Tibial artery (tissue), 4 donors: ENCODE measurements at regions of chr1 and their contacts with region 1.

Region 1: DNA sequence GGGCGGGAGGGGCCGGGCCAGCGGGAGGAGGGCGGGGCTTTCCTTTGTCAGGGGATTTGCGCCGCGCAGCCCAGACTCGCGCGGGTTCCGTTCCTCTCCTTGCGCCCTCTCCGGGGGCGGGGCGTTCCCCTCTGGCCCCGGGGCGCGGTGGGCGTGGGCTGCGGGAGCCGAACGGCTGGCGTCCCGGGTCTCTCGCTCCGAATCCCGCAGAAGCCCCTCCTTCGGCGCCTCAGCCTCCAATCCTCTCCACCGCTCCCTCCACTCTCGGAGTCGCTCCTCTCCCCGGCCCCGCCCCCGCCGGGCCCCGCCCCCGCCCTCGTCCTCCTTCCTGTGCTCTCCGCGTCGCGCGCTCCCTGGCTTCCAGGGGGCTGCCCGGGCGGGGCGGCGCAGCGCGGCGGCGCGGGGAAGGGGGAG is 82.8 kb upstream of the BMP8A start:
- DNase-seq: peak; percentile 95 to 99
- H3K4me3 ChIP-seq: peak overlapping the region; percentile 89 to 93
- H3K27ac ChIP-seq: peak overlapping the region; percentile 84 to 93
- H3K4me1 ChIP-seq: peaks cover 0 to 83% (median 62%) of the 10 kb centered on the region in 4 donors
- H3K27me3 ChIP-seq: no peaks in the 10 kb centered on the region
- CTCF ChIP-seq: no peak

Region 2: DNA sequence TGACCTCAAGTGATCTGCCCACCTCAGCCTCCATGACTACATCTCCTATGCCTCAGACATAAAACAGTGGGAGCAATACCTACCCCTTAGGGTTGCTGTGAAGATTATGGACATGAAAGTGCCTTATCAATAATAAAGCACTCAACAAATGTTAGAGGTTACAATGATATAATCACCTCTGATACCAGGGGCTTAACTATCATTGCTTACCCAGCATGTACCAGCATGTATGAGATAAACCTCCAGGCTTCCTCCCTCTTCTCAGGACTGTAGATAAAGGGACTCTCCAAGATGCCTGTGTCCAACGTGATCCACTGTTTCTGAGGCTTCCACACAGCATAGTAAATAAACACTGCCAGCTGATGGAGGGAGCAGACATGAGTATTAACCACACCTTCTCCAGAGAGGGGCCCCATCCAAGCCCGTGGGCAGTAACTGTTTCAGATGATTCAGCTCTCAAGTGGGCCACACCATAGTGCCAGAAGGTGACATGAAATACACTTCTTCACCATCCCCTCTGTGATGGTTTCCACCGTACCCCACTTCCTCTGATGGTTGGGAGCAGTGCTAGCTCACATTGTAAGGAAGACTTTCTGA is 493.2 kb before region 1 on chr1:
- intact Hi-C with region 1: no loop called
- DNase-seq: no peak
- H3K4me3 ChIP-seq: no peak overlapping the region
- H3K27ac ChIP-seq: no peak overlapping the region
- H3K4me1 ChIP-seq: no peaks in the 10 kb centered on the region
- H3K27me3 ChIP-seq: no peaks in the 10 kb centered on the region
- CTCF ChIP-seq: no peak

Region 3: DNA sequence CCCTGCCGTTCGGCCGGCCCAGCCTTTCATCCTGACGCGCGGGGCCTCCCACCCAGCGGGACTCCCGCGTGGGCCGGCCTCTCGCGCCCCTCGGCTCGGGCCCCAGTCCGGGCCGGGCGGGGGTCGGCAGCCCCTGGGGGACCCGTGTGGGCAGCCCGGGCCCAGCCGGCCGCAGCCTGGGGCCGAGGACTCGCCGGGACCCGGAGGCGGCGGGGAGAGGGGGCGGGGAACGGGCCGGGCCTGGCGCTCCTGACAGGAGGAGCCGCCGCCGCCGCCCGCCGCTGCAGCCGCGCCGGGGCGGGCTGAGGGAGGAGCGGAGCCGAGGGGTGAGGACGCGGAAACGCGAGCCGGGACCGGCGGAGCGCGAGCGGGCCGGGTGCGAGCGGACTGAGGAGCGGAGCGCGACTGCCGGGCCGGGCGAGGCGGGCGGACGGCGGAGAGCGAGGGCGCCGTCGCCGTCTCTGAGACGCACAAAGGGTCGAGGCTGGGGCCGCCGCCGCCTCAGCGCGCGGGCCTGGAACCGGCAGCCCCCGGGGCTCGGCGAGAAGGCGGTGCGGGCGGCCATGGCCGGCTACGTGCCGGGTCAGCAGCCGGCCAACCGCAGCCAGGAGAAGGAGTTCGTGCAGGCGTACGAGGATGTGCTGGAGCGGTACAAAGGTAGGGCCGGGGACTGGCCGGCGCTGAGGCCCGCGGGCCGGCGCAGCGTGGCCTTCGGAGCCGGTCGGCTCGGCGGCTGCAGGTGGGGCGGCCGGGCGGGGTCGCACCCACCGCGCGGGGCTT is 303.4 kb before region 1 on chr1:
- intact Hi-C with region 1: loop called (anchors 5 kb)
- DNase-seq: peak; percentile 77 to 91
- H3K4me3 ChIP-seq: peak overlapping the region; percentile 61 to 72
- H3K27ac ChIP-seq: peak overlapping the region; percentile 87 to 92
- H3K4me1 ChIP-seq: peaks cover 0 to 61% (median 51%) of the 10 kb centered on the region in 4 donors
- H3K27me3 ChIP-seq: no peaks in the 10 kb centered on the region
- CTCF ChIP-seq: no peak

Region 4: DNA sequence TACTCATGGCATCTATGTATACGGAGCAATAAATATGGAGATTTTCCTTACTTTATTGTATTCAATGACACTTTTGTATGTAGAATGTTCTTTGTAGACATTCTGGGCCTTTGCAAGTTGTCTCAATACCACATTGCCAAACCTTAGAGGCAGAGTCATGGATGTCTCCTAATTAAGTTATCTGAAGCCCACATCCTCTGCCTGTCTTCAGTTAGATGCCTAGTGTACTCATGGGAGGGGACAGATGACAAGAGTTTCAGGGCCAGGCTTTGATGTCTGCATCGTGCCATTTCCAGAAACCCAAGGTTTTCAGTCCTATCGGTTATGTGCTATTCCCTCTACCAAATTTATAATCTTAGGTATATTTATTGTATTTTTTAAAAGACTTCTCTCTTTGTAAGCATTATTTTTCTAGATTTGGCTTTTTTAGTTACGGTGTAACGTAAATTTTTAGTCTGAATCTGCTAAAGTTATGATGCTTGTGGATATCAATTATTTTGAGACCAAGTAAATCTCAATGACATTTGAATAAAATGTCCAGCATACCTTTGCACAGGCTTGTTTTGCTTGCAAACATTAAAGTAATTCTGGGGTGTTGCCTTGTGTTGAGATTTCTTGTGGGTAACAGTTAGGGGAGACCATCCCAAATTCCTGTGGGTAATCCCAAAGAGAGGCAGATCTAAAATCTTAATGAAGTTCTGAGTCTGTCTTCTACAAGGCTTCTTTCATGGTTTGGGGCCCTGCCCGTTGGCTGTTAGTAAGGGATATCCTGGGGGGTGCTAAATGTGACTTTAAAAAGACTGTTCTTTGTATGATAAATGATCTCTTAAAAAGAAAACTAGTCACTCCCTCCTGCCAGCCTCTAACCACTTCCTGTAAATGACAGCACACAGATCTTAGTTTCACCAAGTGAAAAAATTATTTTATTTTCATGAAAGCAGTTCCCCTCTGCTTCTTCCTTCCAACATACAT is 212.1 kb before region 1 on chr1:
- intact Hi-C with region 1: loop called (anchors 10 kb)
- DNase-seq: no peak
- H3K4me3 ChIP-seq: no peak overlapping the region
- H3K27ac ChIP-seq: peak overlapping the region; percentile 79 to 83
- H3K4me1 ChIP-seq: peaks cover 9 to 60% (median 47%) of the 10 kb centered on the region in 4 donors
- H3K27me3 ChIP-seq: no peaks in the 10 kb centered on the region
- CTCF ChIP-seq: no peak

Region 5: GRCh38 chr1:39268112-39268581 is 140.5 kb before region 1 on chr1:
- intact Hi-C with region 1: loop called (anchors 10 kb)
- DNase-seq: peak; percentile 47 to 70
- H3K4me3 ChIP-seq: peak overlapping the region; percentile 44 to 53
- H3K27ac ChIP-seq: peak overlapping the region; percentile 75 to 77
- H3K4me1 ChIP-seq: peaks cover 0 to 74% (median 48%) of the 10 kb centered on the region in 4 donors
- H3K27me3 ChIP-seq: no peaks in the 10 kb centered on the region
- CTCF ChIP-seq: no peak

Region 6: GRCh38 chr1:39354572-39354971 is 54.1 kb before region 1 on chr1:
- intact Hi-C with region 1: loop called (anchors 10 kb)
- DNase-seq: no peak
- H3K4me3 ChIP-seq: no peak overlapping the region
- H3K27ac ChIP-seq: no peak overlapping the region
- H3K4me1 ChIP-seq: peaks cover 0 to 13% (median 4%) of the 10 kb centered on the region in 4 donors
- H3K27me3 ChIP-seq: no peaks in the 10 kb centered on the region
- CTCF ChIP-seq: no peak